ENCODE measurements at regions of chr7 and their contacts with region 1.

Region 1: GRCh38 chr7:129091484-129092002 is 36.6 kb upstream of the TNPO3 start:
- DNase-seq: peak; percentile 92
- ATAC-seq: peak; percentile 75
- H3K4me3 Mint-ChIP-seq: no peak overlapping the region
- H3K27ac Mint-ChIP-seq: no peak overlapping the region
- H3K4me1 Mint-ChIP-seq: peaks cover 43% of the 10 kb centered on the region
- H3K27me3 Mint-ChIP-seq: peaks cover 8% of the 10 kb centered on the region

Region 2: GRCh38 chr7:128883622-128884501 is 207.7 kb before region 1 on chr7:
- CTCF ChIA-PET with region 1: interaction called, 34 read pairs
- DNase-seq: peak; percentile 91
- ATAC-seq: peak; percentile 81
- H3K4me3 Mint-ChIP-seq: peak overlapping the region; percentile 2
- H3K27ac Mint-ChIP-seq: peak overlapping the region; percentile 80
- H3K4me1 Mint-ChIP-seq: peaks cover 20% of the 10 kb centered on the region
- H3K27me3 Mint-ChIP-seq: peaks cover 5% of the 10 kb centered on the region

Region 3: GRCh38 chr7:128909625-128910257 is 181.8 kb before region 1 on chr7:
- CTCF ChIA-PET with region 1: interaction called, 23 read pairs
- DNase-seq: no peak
- ATAC-seq: no peak
- H3K4me3 Mint-ChIP-seq: no peak overlapping the region
- H3K27ac Mint-ChIP-seq: no peak overlapping the region
- H3K4me1 Mint-ChIP-seq: no peaks in the 10 kb centered on the region
- H3K27me3 Mint-ChIP-seq: peaks cover 62% of the 10 kb centered on the region

Region 4: GRCh38 chr7:129017933-129018538 is 73.5 kb before region 1 on chr7:
- CTCF ChIA-PET with region 1: interaction called, 11 read pairs
- DNase-seq: no peak
- ATAC-seq: no peak
- H3K4me3 Mint-ChIP-seq: no peak overlapping the region
- H3K27ac Mint-ChIP-seq: no peak overlapping the region
- H3K4me1 Mint-ChIP-seq: peaks cover 10% of the 10 kb centered on the region
- H3K27me3 Mint-ChIP-seq: no peaks in the 10 kb centered on the region

Region 5: GRCh38 chr7:129054438-129055293 is 36.9 kb before region 1 on chr7 and contains the start of gene TNPO3:
- CTCF ChIA-PET with region 1: interaction called, 46 read pairs
- DNase-seq: peak; percentile 95
- ATAC-seq: peak; percentile 89
- H3K4me3 Mint-ChIP-seq: peak within 1 kb of the TSS; percentile 95
- H3K27ac Mint-ChIP-seq: peak within 1 kb of the TSS; percentile 98
- H3K4me1 Mint-ChIP-seq: peaks cover 32% of the 10 kb centered on the region
- H3K27me3 Mint-ChIP-seq: peaks cover 13% of the 10 kb centered on the region
- total RNA-seq, gene TNPO3: 51.9 to 55.8 TPM

Region 6: DNA sequence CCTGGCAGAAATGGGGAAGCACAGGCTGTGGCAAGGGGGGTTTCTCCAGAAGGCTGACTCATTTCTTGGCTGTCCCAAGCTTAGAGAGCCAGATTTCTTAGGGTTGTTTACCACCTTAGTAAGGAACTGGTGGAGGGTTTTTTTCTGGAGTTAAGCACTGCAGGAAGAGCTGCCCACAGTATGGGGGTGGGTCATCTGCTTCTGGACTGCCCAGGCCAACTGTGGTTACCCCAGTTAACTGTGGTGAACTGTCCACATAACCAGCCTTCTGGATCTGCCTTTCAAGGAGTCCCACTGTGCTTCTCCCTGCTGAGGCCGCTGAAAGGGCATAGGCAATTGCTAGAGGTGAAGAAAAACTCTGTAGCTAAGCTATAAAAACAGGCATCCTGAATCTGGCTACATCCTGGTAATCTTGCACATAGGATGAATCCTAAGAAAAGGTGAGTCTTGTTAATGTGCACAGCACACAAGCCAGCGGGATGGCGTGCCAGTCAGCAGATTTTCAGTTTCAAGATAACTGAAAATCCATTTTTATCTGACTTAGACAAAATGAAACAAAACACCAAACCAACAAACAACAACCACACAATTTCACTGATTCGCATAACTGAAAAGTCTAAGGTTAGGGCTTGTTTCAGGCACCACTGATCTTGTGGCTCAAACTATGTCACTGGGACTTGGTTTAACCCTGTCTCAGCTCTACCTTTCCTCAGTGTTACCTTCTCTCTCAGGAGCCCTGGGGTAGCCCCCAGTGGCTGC is 31.4 kb after region 1 on chr7:
- CTCF ChIA-PET with region 1: interaction called, 13 read pairs
- DNase-seq: peak; percentile 62
- ATAC-seq: peak; percentile 82
- H3K4me3 Mint-ChIP-seq: peak overlapping the region; percentile 55
- H3K27ac Mint-ChIP-seq: peak overlapping the region; percentile 79
- H3K4me1 Mint-ChIP-seq: peaks cover 24% of the 10 kb centered on the region
- H3K27me3 Mint-ChIP-seq: peaks cover 24% of the 10 kb centered on the region

Region 7: GRCh38 chr7:129607457-129608120 is 516.0 kb after region 1 on chr7:
- CTCF ChIA-PET with region 1: no interaction called
- DNase-seq: peak; percentile 71
- ATAC-seq: no peak
- H3K4me3 Mint-ChIP-seq: no peak overlapping the region
- H3K27ac Mint-ChIP-seq: no peak overlapping the region
- H3K4me1 Mint-ChIP-seq: peaks cover 34% of the 10 kb centered on the region
- H3K27me3 Mint-ChIP-seq: no peaks in the 10 kb centered on the region